ENCODE measurements at regions of chr9 and their contacts with region 1.

Region 1: DNA sequence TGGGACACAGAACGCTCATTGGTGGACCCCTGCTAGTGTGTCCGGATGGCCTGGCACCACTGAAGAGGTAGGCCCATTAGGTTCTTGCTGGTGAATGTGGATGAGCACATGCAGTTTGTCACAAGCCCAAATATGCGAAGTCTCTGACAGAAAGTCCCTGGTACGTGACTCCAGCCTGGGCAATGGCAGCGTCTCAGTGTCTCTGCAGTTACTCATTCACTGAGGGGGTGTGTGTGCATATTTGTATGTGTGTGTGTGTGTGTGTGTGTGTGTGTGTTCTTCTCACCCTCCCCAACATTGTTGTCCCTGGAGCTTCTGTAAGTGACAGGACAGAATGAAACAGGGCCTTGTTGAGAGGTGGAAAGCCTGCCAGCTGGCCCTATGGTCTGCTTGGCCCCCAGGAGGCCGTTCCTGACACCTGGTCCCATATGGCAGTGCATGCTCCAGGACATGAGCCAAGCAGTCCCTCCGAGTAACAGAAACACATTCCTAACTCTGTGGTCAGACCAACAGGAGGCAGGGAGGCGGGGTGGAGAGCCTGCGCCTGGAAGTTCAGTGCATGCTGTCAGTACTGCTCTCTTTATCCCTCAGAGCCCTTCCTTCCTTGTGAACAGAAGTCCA is 169.9 kb downstream of the SLC28A3 start:
- DNase-seq: no peak
- H3K4me3 ChIP-seq: no peak overlapping the region
- H3K4me3 Mint-ChIP-seq: no peak overlapping the region
- H3K27ac ChIP-seq: no peak overlapping the region
- H3K27ac Mint-ChIP-seq: no peak overlapping the region
- H3K4me1 ChIP-seq: no peaks in the 10 kb centered on the region
- H3K4me1 Mint-ChIP-seq: no peaks in the 10 kb centered on the region
- H3K27me3 ChIP-seq: no peaks in the 10 kb centered on the region
- H3K27me3 Mint-ChIP-seq: peaks cover 3% of the 10 kb centered on the region in 2 donors

Region 2: DNA sequence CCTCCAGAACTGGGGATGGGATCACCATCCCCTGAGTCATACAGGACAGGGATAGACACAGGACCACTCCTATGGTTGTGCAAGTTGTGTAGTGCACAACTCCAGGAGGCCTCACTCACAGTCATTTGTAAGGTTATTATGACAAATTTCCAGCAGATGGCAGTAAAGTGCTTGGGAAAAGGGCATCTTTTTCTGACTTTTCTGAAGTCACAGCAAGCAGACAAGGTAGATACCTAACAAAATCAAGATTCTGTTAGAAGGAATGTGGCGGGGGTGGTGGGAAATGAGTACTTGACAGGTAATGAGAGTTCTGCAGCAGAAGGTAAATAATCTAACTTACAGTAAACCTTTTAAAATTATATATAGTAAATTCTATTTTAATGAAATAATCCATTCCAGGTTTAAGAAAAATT is 232.7 kb before region 1 on chr9:
- CTCF ChIA-PET with region 1: interaction called, 41 read pairs
- POLR2A ChIA-PET with region 1: no interaction called
- intact Hi-C with region 1: loop called (anchors 1 kb)
- DNase-seq: peak; percentile 47 to 72 (median 67)
- H3K4me3 ChIP-seq: no peak overlapping the region
- H3K4me3 Mint-ChIP-seq: peak overlapping the region in 1 of 8 donors; percentile 2
- H3K27ac ChIP-seq: no peak overlapping the region
- H3K27ac Mint-ChIP-seq: no peak overlapping the region
- H3K4me1 ChIP-seq: no peaks in the 10 kb centered on the region
- H3K4me1 Mint-ChIP-seq: no peaks in the 10 kb centered on the region
- H3K27me3 ChIP-seq: no peaks in the 10 kb centered on the region
- H3K27me3 Mint-ChIP-seq: no peaks in the 10 kb centered on the region

Region 3: DNA sequence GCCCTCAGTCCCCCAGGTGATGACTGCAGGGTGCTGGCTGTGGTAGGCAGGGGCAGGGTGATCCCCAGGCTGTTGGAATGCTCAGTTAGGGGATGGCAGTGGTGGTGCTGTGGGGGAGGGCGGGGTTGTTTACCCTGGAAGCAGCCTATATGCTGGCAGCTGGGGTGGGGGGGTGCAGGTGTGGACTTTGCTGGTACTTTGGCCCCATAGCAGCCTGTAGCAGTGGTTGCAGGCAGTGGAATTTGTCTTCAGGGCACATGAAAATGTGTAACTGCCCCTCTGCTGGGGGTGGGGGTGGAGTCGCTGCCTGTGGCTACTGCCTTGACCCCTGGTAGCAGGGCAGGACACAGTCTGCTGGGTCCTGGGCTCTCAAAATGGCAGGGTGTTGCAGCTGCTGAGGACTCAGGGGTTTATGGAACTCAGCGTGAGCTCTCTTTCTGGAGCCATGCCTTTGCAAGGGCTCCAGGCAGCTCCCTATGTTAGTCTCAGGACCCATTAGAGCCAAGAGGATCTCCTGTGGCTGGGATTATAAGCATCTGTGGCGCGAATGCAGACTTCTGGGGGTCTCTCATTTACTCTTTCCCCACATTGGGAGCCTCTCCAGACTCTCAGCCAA is 125.0 kb before region 1 on chr9:
- CTCF ChIA-PET with region 1: no interaction called
- POLR2A ChIA-PET with region 1: no interaction called
- intact Hi-C with region 1: no loop called
- DNase-seq: no peak
- H3K4me3 ChIP-seq: no peak overlapping the region
- H3K4me3 Mint-ChIP-seq: no peak overlapping the region
- H3K27ac ChIP-seq: no peak overlapping the region
- H3K27ac Mint-ChIP-seq: peak overlapping the region in 1 of 7 donors; percentile 54
- H3K4me1 ChIP-seq: no peaks in the 10 kb centered on the region
- H3K4me1 Mint-ChIP-seq: no peaks in the 10 kb centered on the region
- H3K27me3 ChIP-seq: no peaks in the 10 kb centered on the region
- H3K27me3 Mint-ChIP-seq: peaks cover 13 to 15% of the 10 kb centered on the region in 2 donors

Region 4: GRCh38 chr9:84187090-84187489 is 16.5 kb after region 1 on chr9:
- CTCF ChIA-PET with region 1: interaction called, 12 read pairs
- POLR2A ChIA-PET with region 1: no interaction called
- intact Hi-C with region 1: no loop called
- DNase-seq: no peak
- H3K4me3 ChIP-seq: no peak overlapping the region
- H3K4me3 Mint-ChIP-seq: no peak overlapping the region
- H3K27ac ChIP-seq: no peak overlapping the region
- H3K27ac Mint-ChIP-seq: no peak overlapping the region
- H3K4me1 ChIP-seq: no peaks in the 10 kb centered on the region
- H3K4me1 Mint-ChIP-seq: no peaks in the 10 kb centered on the region
- H3K27me3 ChIP-seq: no peaks in the 10 kb centered on the region
- H3K27me3 Mint-ChIP-seq: peaks cover 7 to 10% of the 10 kb centered on the region in 2 donors

Region 5: GRCh38 chr9:84207491-84207951 is 36.9 kb after region 1 on chr9:
- CTCF ChIA-PET with region 1: interaction called, 10 read pairs
- POLR2A ChIA-PET with region 1: no interaction called
- intact Hi-C with region 1: no loop called
- DNase-seq: no peak
- H3K4me3 ChIP-seq: no peak overlapping the region
- H3K4me3 Mint-ChIP-seq: no peak overlapping the region
- H3K27ac ChIP-seq: no peak overlapping the region
- H3K27ac Mint-ChIP-seq: no peak overlapping the region
- H3K4me1 ChIP-seq: no peaks in the 10 kb centered on the region
- H3K4me1 Mint-ChIP-seq: peaks cover 0 to 2% (median under 1%) of the 10 kb centered on the region in 4 donors
- H3K27me3 ChIP-seq: no peaks in the 10 kb centered on the region
- H3K27me3 Mint-ChIP-seq: peaks cover 4 to 7% of the 10 kb centered on the region in 2 donors

Region 6: GRCh38 chr9:84368601-84369000 is 198.0 kb after region 1 on chr9:
- CTCF ChIA-PET with region 1: no interaction called
- POLR2A ChIA-PET with region 1: no interaction called
- intact Hi-C with region 1: no loop called
- DNase-seq: no peak
- H3K4me3 ChIP-seq: no peak overlapping the region
- H3K4me3 Mint-ChIP-seq: no peak overlapping the region
- H3K27ac ChIP-seq: no peak overlapping the region
- H3K27ac Mint-ChIP-seq: no peak overlapping the region
- H3K4me1 ChIP-seq: no peaks in the 10 kb centered on the region
- H3K4me1 Mint-ChIP-seq: peaks cover 0 to 1% (median 0%) of the 10 kb centered on the region in 4 donors
- H3K27me3 ChIP-seq: no peaks in the 10 kb centered on the region
- H3K27me3 Mint-ChIP-seq: peaks cover 5 to 11% of the 10 kb centered on the region in 2 donors